PC-3 (cell line): ENCODE measurements at regions of chr2 and their contacts with region 1.

Region 1: DNA sequence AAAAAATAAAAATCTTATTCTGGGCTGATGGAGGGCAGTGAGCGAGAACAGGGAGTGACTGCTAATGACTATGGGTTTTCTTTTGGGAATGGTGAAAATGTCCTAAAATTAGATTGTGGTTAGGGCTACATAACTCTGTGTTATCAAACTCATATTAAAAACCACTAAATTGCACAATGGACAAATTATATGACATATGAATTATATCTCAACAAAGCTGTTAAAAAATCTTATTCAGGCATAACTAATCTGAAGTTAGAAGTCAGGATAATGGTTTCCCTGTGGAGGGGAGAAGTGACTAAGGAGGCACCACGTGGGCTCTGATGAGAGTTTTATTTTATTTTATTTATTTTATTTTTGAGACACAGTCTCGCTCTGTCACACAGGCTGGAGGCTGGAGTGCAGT is 32.1 kb upstream of the DPP4 start:
- DNase-seq: no peak
- ATAC-seq: no peak
- H3K4me3 ChIP-seq: no peak overlapping the region
- H3K27ac ChIP-seq: peak overlapping the region; percentile 94
- H3K4me1 ChIP-seq: peaks cover 40% of the 10 kb centered on the region
- H3K27me3 ChIP-seq: no peaks in the 10 kb centered on the region
- CTCF ChIP-seq: no peak

Region 2: DNA sequence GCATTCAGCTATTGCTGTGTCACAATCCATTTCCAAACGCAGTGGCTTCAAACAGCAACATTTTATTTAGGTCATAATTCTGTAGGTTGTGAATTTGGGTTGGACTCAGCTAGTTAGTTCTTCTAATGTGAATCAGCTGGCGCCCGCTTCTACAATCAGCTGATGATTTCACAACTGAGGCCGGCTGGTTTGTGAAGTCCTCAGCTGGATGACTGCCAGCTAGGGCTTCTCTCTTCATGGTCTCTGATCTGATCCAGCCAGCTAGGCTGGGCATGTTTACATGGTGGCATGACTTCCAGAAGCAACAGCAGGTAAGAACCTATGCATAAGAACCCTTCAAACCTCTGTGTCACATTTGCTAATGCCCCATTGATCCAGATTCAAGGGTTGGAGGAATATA is 310.0 kb before region 1 on chr2:
- CTCF ChIA-PET with region 1: no interaction called
- POLR2A ChIA-PET with region 1: no interaction called
- intact Hi-C with region 1: no loop called
- DNase-seq: no peak
- ATAC-seq: no peak
- H3K4me3 ChIP-seq: no peak overlapping the region
- H3K27ac ChIP-seq: no peak overlapping the region
- H3K4me1 ChIP-seq: no peaks in the 10 kb centered on the region
- H3K27me3 ChIP-seq: no peaks in the 10 kb centered on the region
- CTCF ChIP-seq: no peak

Region 3: DNA sequence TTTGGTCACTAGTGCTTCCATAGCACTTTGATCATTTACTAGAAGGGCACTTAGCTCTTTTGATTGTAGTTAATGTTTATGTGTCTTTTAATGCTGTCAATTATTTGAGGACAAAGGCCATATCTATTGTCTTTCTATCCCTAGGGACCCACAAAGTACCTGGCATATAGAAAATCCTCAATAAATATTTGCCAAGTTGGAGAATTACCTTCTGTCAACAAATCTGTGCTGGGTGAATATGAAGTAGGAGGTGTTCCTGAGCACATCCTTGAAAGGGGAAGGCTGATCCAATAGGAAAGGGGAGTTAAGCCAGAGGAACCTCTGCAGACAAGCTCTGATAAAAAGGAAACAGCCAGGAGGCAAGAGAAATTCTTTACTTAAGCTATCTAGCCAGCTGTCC is 40.4 kb before region 1 on chr2:
- CTCF ChIA-PET with region 1: no interaction called
- POLR2A ChIA-PET with region 1: no interaction called
- intact Hi-C with region 1: loop called (anchors 2 kb)
- DNase-seq: no peak
- ATAC-seq: no peak
- H3K4me3 ChIP-seq: no peak overlapping the region
- H3K27ac ChIP-seq: no peak overlapping the region
- H3K4me1 ChIP-seq: peaks cover 24% of the 10 kb centered on the region
- H3K27me3 ChIP-seq: no peaks in the 10 kb centered on the region
- CTCF ChIP-seq: no peak

Region 4: GRCh38 chr2:162091325-162092007 is 14.7 kb before region 1 on chr2:
- CTCF ChIA-PET with region 1: no interaction called
- POLR2A ChIA-PET with region 1: interaction called, 6 read pairs
- intact Hi-C with region 1: loop called (anchors 1 kb)
- DNase-seq: peak; percentile 92
- ATAC-seq: peak; percentile 72
- H3K4me3 ChIP-seq: peak overlapping the region; percentile 22; the same call in 1 of the 2 replicates
- H3K27ac ChIP-seq: peak overlapping the region; percentile 99
- H3K4me1 ChIP-seq: peaks cover 65% of the 10 kb centered on the region
- H3K27me3 ChIP-seq: no peaks in the 10 kb centered on the region
- CTCF ChIP-seq: peak; percentile 63

Region 5: GRCh38 chr2:162118559-162119031 is 12.4 kb after region 1 on chr2:
- CTCF ChIA-PET with region 1: no interaction called
- POLR2A ChIA-PET with region 1: no interaction called
- intact Hi-C with region 1: loop called (anchors 1 kb)
- DNase-seq: no peak
- ATAC-seq: peak; percentile 53
- H3K4me3 ChIP-seq: peak overlapping the region; percentile 39; the same call in 1 of the 2 replicates
- H3K27ac ChIP-seq: peak overlapping the region; percentile 99
- H3K4me1 ChIP-seq: peaks cover 48% of the 10 kb centered on the region
- H3K27me3 ChIP-seq: no peaks in the 10 kb centered on the region
- CTCF ChIP-seq: no peak